GM12878 (cell line): ENCODE measurements at regions of chr1 and their contacts with region 1.

Region 1: DNA sequence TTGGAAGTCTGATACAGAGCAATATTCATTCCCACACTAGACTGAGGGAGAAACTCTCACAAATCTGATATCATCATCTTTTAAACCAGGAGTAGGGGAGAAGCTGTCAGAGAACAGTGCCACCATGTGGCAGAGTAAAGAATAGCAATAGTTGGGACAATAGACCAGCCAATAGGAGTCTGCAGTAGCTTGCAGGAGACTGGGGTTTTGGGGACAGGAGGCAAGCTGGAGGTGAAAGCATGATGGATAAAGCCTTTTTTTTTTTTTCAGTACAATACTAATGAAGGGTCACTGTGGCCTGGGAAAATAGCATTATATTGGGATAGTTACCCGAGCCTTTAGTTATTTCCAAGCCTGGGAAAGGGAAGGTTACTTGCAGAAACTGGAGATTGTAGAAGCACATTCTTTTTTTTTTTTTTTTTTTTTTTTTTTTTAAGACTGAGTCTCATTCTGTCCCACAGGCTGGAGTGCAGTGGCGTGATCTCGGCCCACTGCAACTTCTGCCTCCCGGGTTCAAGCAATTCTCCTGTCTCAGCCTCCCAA is 120.7 kb downstream of the S1PR1 start:
- DNase-seq: peak; percentile 95
- ATAC-seq: peak; percentile 99
- H3K4me3 ChIP-seq: no peak overlapping the region
- H3K27ac ChIP-seq: peak overlapping the region; percentile 75
- H3K4me1 ChIP-seq: peaks cover 7% of the 10 kb centered on the region; the same call in 1 of the 2 replicates
- H3K27me3 ChIP-seq: no peaks in the 10 kb centered on the region
- CTCF ChIP-seq: peak; percentile 79 to 92 (median 89)
- EP300 ChIP-seq: no peak
- POLR2A ChIP-seq: no peak
- RAD21 ChIP-seq: peak; percentile 93

Region 2: GRCh38 chr1:101136739-101137138 is 220.8 kb before region 1 on chr1:
- CTCF ChIA-PET with region 1: interaction called, 11 read pairs
- POLR2A ChIA-PET with region 1: no interaction called
- RAD21 ChIA-PET with region 1: interaction called, 4 read pairs
- SMC1A ChIA-PET with region 1: interaction called, 3 read pairs
- in situ Hi-C with region 1: no loop called
- intact Hi-C with region 1: loop called (anchors 1 kb)
- DNase-seq: peak; percentile 68
- ATAC-seq: peak; percentile 86
- H3K4me3 ChIP-seq: no peak overlapping the region
- H3K27ac ChIP-seq: no peak overlapping the region
- H3K4me1 ChIP-seq: peaks cover 17% of the 10 kb centered on the region
- H3K27me3 ChIP-seq: no peaks in the 10 kb centered on the region
- CTCF ChIP-seq: peak; percentile 29 to 61 (median 41); a peak in 4 of 6 replicates
- EP300 ChIP-seq: no peak
- POLR2A ChIP-seq: no peak
- RAD21 ChIP-seq: peak; percentile 83

Region 3: DNA sequence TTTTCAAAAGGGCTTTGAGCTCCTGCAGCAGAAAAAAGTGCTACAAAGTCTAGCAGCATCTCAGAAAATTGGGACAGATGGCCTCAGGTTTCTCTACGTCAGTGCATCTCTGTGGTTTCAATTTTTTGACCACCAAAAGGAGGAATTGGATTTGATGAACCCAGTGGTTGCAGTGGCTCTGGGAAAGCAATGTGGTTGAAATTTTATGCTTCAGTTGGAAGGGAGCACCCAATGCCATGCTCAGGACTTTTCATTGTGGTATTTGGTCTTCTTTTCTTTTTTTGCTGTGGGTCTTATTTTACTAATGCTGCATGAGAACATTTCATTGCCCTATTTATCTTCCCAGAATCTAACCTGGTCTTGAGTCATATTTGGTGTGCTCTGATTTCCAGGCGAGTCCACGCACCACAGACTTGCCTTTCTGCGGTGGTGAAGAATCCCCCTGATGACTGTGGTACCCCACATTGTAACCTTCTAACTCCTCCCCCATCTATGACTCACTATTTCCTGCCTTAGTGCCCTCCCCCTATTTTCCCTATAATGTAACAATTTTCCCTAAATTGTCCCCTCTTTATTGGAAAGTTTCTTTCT is 64.0 kb before region 1 on chr1:
- CTCF ChIA-PET with region 1: interaction called, 42 read pairs
- POLR2A ChIA-PET with region 1: interaction called, 12 read pairs
- RAD21 ChIA-PET with region 1: interaction called, 83 read pairs
- SMC1A ChIA-PET with region 1: interaction called, 68 read pairs
- in situ Hi-C with region 1: no loop called
- intact Hi-C with region 1: loop called (anchors 1 kb)
- DNase-seq: peak; percentile 95
- ATAC-seq: peak; percentile 76
- H3K4me3 ChIP-seq: no peak overlapping the region; the same call in 1 of the 2 replicates
- H3K27ac ChIP-seq: peak overlapping the region; percentile 54
- H3K4me1 ChIP-seq: peaks cover 34% of the 10 kb centered on the region
- H3K27me3 ChIP-seq: no peaks in the 10 kb centered on the region
- CTCF ChIP-seq: no peak
- EP300 ChIP-seq: peak in 1 of 2 experiments; percentile 91; a peak in 3 of 4 replicates
- POLR2A ChIP-seq: no peak
- RAD21 ChIP-seq: 0 out of 2 replicates have a peak, but pooled peaks have one; percentile 8

Region 4: DNA sequence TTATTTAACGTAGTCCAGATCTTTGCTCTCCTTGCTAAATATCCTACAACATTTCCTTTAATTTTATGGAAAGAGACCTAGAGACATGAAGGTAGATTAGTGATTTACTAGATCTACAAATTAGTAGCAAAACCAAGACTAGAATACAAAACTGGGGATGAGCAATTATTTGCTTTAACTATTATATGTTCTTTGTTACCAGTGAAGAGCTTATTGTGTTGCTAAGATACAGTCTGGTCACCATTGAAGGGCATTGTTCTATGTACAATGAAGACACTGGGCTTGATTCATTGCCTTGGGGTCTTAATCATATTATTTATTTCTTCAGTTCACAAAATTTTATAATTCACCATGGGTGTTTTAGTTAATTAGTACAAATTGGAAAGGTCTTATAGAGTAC is 32.4 kb before region 1 on chr1:
- CTCF ChIA-PET with region 1: interaction called, 18 read pairs
- POLR2A ChIA-PET with region 1: interaction called, 4 read pairs
- RAD21 ChIA-PET with region 1: interaction called, 8 read pairs
- SMC1A ChIA-PET with region 1: interaction called, 16 read pairs
- in situ Hi-C with region 1: no loop called
- intact Hi-C with region 1: no loop called
- DNase-seq: no peak
- ATAC-seq: no peak
- H3K4me3 ChIP-seq: no peak overlapping the region
- H3K27ac ChIP-seq: no peak overlapping the region
- H3K4me1 ChIP-seq: no peaks in the 10 kb centered on the region
- H3K27me3 ChIP-seq: no peaks in the 10 kb centered on the region
- CTCF ChIP-seq: no peak
- EP300 ChIP-seq: no peak
- POLR2A ChIP-seq: no peak
- RAD21 ChIP-seq: no peak

Region 5: DNA sequence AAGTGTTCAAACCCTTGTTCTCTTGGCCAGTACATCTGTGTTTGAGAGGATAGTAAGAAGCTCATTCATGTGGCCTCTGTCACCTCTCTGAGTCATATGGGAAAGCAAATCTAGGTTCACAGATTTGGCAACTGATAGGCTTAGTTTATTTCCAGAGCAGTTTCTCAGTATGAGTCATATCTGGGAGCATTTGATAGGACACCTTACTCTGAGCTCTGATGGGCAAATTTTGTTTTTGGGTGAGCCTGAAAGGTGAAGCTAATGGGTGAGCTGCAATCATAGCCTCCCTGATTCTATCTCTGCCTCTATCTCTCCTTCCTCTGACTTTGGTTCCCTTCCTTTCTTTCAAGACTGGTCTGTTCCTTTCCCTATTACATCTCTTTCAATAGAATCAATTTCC is 13.7 kb after region 1 on chr1:
- CTCF ChIA-PET with region 1: interaction called, 35 read pairs
- POLR2A ChIA-PET with region 1: interaction called, 15 read pairs
- RAD21 ChIA-PET with region 1: interaction called, 37 read pairs
- SMC1A ChIA-PET with region 1: interaction called, 46 read pairs
- in situ Hi-C with region 1: no loop called
- intact Hi-C with region 1: no loop called
- DNase-seq: peak; percentile 96
- ATAC-seq: peak; percentile 92
- H3K4me3 ChIP-seq: peak overlapping the region; percentile 53
- H3K27ac ChIP-seq: peak overlapping the region; percentile 90
- H3K4me1 ChIP-seq: peaks cover 20% of the 10 kb centered on the region
- H3K27me3 ChIP-seq: no peaks in the 10 kb centered on the region
- CTCF ChIP-seq: no peak
- EP300 ChIP-seq: peak; percentile 70 to 83; a peak in 3 of 4 replicates
- POLR2A ChIP-seq: no peak; the same call in 1 of the 2 replicates
- RAD21 ChIP-seq: peak; percentile 26

Region 6: DNA sequence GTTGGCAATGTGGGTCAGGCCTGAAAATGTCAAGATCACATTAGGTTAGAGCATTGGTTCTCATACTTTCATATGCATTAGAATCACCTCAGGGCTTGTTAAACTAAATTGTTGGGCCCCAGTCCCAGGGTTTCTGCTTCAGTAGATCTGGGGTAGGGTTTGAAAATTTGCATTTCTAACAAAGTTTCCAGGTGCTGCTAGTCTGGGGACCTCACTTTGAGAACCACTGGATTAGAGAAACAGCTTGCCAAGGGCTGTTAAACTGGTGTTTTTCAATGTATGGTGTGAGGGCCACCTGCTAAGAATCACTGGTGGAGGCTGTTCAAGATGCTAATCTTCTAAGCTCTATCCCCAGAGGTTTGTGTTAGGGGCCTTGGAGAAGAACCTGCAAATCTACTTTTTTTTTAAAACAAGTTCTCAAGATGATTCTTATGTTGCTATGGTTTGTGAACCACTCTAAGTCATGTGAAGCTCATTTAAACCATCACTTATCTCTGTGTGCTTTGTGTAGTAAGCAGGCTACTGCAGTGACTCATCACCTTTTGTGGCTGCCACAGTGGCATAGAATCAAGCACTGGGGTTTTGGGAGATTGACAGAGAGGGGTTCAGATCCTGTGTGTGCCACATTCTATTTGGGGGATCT is 31.5 kb after region 1 on chr1:
- CTCF ChIA-PET with region 1: interaction called, 12 read pairs
- POLR2A ChIA-PET with region 1: interaction called, 7 read pairs
- RAD21 ChIA-PET with region 1: interaction called, 10 read pairs
- SMC1A ChIA-PET with region 1: interaction called, 618 read pairs
- in situ Hi-C with region 1: no loop called
- intact Hi-C with region 1: loop called (anchors 1 kb)
- DNase-seq: peak; percentile 90
- ATAC-seq: peak; percentile 93
- H3K4me3 ChIP-seq: no peak overlapping the region
- H3K27ac ChIP-seq: peak overlapping the region; percentile 96
- H3K4me1 ChIP-seq: peaks cover 34% of the 10 kb centered on the region
- H3K27me3 ChIP-seq: no peaks in the 10 kb centered on the region
- CTCF ChIP-seq: no peak
- EP300 ChIP-seq: no peak; a peak in 1 of 4 replicates
- POLR2A ChIP-seq: no peak
- RAD21 ChIP-seq: peak; percentile 15; the same call in 1 of the 2 replicates